ENCODE measurements at regions of chr3 and their contacts with region 1.

Region 1: DNA sequence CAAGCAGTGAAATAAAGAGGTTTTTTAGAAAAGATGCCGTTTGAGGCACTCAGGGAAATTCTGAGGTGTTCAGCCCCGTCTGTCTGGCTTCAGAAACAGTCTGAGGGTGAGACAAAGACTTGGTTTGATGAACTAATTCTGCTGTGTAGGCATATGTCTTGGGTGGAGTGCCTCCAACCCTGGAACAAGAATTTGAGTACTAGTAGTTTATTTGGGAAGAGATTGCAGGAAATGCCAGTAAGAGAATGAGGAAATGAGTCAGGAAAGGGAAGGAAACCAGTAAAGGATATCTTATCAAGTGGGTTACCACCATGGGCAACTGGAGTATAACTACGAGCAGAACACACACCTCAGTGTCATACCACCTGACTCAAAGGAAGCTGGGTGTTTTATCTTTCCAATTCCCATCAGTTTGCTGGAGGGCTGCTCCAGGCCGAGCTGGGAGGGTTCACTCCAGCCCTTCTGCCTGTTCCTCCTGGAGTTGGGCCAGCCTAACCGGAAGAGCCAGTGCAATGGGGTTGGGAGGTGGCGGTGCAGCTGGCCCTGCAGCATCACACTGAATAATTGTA is 75.3 kb downstream of the TGFBR2 start:
- DNase-seq: peak; percentile 45
- H3K4me3 Mint-ChIP-seq: peak overlapping the region; percentile 18
- H3K27ac Mint-ChIP-seq: peak overlapping the region; percentile 93
- H3K4me1 Mint-ChIP-seq: peaks cover 100% of the 10 kb centered on the region
- H3K27me3 Mint-ChIP-seq: no peaks in the 10 kb centered on the region

Region 2: GRCh38 chr3:30611613-30612436 is 69.9 kb before region 1 on chr3:
- CTCF ChIA-PET with region 1: no interaction called
- intact Hi-C with region 1: loop called (anchors 1 kb)
- DNase-seq: peak; percentile 25
- H3K4me3 Mint-ChIP-seq: peak overlapping the region; percentile 83
- H3K27ac Mint-ChIP-seq: peak overlapping the region; percentile 98
- H3K4me1 Mint-ChIP-seq: peaks cover 57% of the 10 kb centered on the region
- H3K27me3 Mint-ChIP-seq: no peaks in the 10 kb centered on the region

Region 3: DNA sequence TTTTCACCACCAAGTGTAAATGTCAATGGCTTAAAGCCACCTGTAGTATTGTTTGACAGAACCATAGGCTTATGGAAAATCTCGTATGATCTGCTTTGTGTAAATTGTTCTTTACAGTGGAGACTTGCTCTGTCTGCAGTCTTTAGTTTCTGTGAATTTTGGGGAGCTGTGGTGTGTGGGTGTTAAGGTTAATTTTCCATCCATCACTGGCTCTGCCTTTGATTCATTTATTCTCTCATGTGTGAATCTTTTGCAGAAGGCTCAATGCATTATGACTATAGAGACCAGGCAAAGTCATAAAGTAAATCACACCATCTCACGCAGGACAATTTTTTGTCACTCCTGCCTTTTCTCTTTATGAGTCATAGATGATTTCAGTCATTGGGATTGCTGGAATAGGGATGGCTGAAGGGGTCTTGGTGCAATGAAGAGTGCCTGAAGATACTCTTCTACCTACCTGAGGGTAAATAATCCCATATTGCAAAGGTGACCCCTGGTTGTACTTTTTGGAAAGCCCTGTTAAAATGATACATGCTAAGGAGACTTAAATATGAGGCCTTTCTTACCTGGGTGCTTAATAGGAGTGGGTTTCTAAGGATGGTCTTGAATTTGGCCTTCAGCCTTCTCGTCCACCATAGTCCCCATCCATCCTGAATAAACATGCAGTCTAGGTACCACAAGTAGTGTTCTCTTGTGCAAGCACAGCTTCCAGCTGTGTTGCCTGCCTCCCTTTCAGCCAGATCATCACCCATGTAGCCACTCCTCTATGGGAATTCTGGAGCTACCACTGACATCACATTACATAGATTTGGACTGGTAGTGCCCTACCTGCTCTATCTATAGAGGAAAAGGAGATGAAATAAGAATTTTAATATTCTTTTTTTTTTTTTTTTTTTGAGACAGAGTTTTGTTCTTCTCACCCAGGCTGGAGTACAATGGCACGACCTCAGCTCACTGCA is 61.0 kb before region 1 on chr3:
- CTCF ChIA-PET with region 1: interaction called, 3 read pairs
- intact Hi-C with region 1: loop called (anchors 1 kb)
- DNase-seq: peak; percentile 73
- H3K4me3 Mint-ChIP-seq: peak overlapping the region; percentile 58
- H3K27ac Mint-ChIP-seq: peak overlapping the region; percentile 98
- H3K4me1 Mint-ChIP-seq: peaks cover 89% of the 10 kb centered on the region
- H3K27me3 Mint-ChIP-seq: no peaks in the 10 kb centered on the region

Region 4: GRCh38 chr3:30667280-30667651 is 14.5 kb before region 1 on chr3:
- CTCF ChIA-PET with region 1: interaction called, 8 read pairs
- intact Hi-C with region 1: loop called (anchors 2 kb)
- DNase-seq: peak; percentile 67
- H3K4me3 Mint-ChIP-seq: peak overlapping the region; percentile 15
- H3K27ac Mint-ChIP-seq: peak overlapping the region; percentile 93
- H3K4me1 Mint-ChIP-seq: peaks cover 95% of the 10 kb centered on the region
- H3K27me3 Mint-ChIP-seq: no peaks in the 10 kb centered on the region

Region 5: DNA sequence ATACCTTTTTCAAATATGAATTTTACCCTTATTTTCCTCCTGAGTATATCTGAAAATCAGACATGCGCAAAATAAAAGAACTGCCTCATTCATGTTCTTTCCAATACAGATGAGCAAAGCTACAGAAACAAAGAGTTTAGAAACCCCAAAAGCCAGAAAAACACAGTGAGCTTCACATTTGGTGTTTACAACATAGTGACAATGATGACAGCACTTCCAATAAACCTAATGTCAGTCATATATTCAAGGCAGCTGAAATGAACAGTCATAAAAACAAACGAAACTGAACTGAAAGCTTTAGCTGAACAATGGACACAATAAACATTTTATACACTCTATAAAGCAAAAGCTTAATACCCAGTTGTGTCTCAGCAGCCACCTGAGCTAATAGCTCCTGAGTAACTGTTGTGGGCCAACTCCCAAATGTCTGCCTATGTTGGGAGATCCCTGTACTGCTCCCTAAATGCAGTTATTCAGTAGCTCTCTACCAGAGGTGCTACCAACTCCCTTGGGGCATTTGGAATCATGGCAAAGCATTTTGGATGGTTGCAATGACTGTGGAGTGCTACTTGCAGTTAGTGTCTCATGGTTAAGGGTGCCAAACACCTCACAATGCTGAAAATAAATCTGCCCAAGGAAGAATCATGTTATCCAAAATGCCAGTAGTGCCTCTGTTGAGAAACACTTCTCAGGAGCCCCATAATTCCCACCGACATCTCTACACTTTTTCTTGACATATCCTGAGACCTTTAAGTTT is 56.2 kb after region 1 on chr3:
- CTCF ChIA-PET with region 1: no interaction called
- intact Hi-C with region 1: loop called (anchors 2 kb)
- DNase-seq: no peak
- H3K4me3 Mint-ChIP-seq: no peak overlapping the region
- H3K27ac Mint-ChIP-seq: peak overlapping the region; percentile 74
- H3K4me1 Mint-ChIP-seq: peaks cover 42% of the 10 kb centered on the region
- H3K27me3 Mint-ChIP-seq: no peaks in the 10 kb centered on the region

Region 6: DNA sequence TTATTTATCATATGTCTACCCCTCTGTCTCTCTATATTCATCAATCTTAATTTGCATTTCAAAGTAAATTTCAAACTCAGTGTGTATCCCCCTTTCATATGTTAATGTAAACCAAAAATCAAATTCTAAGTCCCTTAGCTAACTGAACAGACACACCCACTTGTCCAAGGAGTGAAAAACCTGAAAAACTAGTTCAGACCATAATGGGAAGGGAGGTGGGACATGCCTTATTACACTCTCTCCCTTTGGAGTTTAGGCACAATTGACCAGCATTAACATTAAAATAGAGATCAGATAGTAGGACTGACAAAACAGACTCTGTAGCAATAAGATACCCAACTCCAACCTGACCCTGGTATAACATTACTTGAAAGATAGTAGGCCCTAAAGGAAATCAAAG is 460.4 kb after region 1 on chr3:
- CTCF ChIA-PET with region 1: no interaction called
- intact Hi-C with region 1: no loop called
- DNase-seq: no peak
- H3K4me3 Mint-ChIP-seq: no peak overlapping the region
- H3K27ac Mint-ChIP-seq: no peak overlapping the region
- H3K4me1 Mint-ChIP-seq: no peaks in the 10 kb centered on the region
- H3K27me3 Mint-ChIP-seq: no peaks in the 10 kb centered on the region

Region 7: GRCh38 chr3:31862666-31863279 is 1181.0 kb after region 1 on chr3:
- CTCF ChIA-PET with region 1: no interaction called
- intact Hi-C with region 1: no loop called
- DNase-seq: no peak
- H3K4me3 Mint-ChIP-seq: no peak overlapping the region
- H3K27ac Mint-ChIP-seq: no peak overlapping the region
- H3K4me1 Mint-ChIP-seq: no peaks in the 10 kb centered on the region
- H3K27me3 Mint-ChIP-seq: peaks cover 7% of the 10 kb centered on the region